Sigmoid colon (tissue), 7 donors: ENCODE measurements at regions of chr2 and their contacts with region 1.

Region 1: DNA sequence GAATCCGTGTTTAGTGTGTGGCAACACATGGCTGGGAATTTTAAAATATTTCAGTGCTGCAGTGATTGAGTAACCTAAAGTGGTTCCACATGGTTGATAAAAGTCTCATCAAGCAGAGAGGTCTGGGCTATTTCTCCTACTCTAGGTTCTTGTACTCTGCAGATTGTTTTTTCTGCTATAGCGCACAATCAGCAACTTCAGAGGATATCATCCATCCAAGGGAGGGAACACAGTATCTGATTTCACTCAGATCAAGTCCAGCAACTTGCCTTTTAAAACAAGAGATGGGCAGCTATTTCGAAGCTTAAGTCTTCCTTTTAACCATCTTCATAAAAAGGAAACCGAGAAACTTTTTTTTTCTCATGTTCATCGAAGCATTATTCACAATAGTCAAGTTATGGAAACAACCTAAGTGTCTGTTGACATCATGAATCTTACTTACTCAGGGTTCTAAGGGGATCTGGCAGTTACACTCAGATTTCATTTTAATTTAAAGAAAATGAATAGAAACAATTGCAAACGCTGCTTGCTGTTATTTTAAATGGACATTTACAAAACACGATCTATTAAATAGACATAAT is 172.7 kb upstream of the TRIB2 start:
- DNase-seq: no peak
- H3K4me3 ChIP-seq: no peak overlapping the region
- H3K27ac ChIP-seq: no peak overlapping the region
- H3K4me1 ChIP-seq: peaks cover 0 to 19% (median 12%) of the 10 kb centered on the region in 4 donors
- H3K27me3 ChIP-seq: no peaks in the 10 kb centered on the region
- CTCF ChIP-seq: no peak
- EP300 ChIP-seq: no peak
- POLR2A ChIP-seq: no peak

Region 2: GRCh38 chr2:12397854-12398253 is 146.2 kb before region 1 on chr2:
- intact Hi-C with region 1: no loop called
- DNase-seq: no peak
- H3K4me3 ChIP-seq: no peak overlapping the region
- H3K27ac ChIP-seq: no peak overlapping the region
- H3K4me1 ChIP-seq: no peaks in the 10 kb centered on the region
- H3K27me3 ChIP-seq: no peaks in the 10 kb centered on the region
- CTCF ChIP-seq: no peak
- EP300 ChIP-seq: no peak
- POLR2A ChIP-seq: no peak

Region 3: DNA sequence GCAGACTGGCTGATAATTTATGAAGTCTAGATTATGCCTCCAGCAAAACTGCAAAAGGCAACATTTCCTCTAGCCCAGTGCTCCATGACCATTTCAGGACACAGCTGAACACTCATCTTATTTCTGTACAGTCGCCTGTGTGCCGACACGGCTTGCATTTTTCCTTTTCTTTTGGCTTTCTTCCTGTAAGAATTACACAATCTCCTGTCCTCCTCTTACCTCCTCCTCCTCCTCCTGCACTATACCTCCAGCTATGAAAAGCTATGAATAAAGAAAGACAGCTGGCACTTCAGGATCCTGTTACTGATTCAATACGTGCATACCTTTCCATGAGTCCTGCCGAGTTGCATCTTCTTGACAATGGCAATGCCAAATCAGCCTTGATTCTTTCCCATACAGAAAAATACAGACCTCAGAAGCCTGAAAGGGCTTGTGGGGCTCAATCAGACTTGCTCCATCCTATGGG is 140.4 kb after region 1 on chr2:
- intact Hi-C with region 1: loop called (anchors 10 kb)
- DNase-seq: peak; percentile 71
- H3K4me3 ChIP-seq: peak overlapping the region in 1 of 4 donors; percentile 25
- H3K27ac ChIP-seq: peak overlapping the region; percentile 45 to 85 (median 76)
- H3K4me1 ChIP-seq: peaks cover 0 to 47% (median 37%) of the 10 kb centered on the region in 4 donors
- H3K27me3 ChIP-seq: no peaks in the 10 kb centered on the region
- CTCF ChIP-seq: no peak
- EP300 ChIP-seq: peak in 2 of 4 donors; percentile 60 to 87
- POLR2A ChIP-seq: no peak